Ascending aorta (tissue), 2 donors: ENCODE measurements at regions of chr3 and their contacts with region 1.

Region 1: GRCh38 chr3:127822698-127823425 is 547 bp upstream of the MGLL start:
- DNase-seq: peak in 1 of 2 donors; percentile 81
- H3K4me3 ChIP-seq: peak overlapping the region; percentile 79 to 99
- H3K27ac ChIP-seq: peak overlapping the region; percentile 86 to 88
- H3K4me1 ChIP-seq: peaks cover 0 to 4% of the 10 kb centered on the region in 2 donors
- H3K27me3 ChIP-seq: no peaks in the 10 kb centered on the region
- CTCF ChIP-seq: peak in 1 of 3 experiments; percentile 75

Region 2: GRCh38 chr3:127574880-127575878 is 247.7 kb before region 1 on chr3:
- intact Hi-C with region 1: loop called (anchors 10 kb)
- DNase-seq: peak; percentile 52 to 93
- H3K4me3 ChIP-seq: no peak overlapping the region
- H3K27ac ChIP-seq: no peak overlapping the region
- H3K4me1 ChIP-seq: peaks cover 0 to 4% of the 10 kb centered on the region in 2 donors
- H3K27me3 ChIP-seq: no peaks in the 10 kb centered on the region
- CTCF ChIP-seq: peak; percentile 88 to 99 (median 98)

Region 3: GRCh38 chr3:127672516-127673190 is 150.2 kb before region 1 on chr3 and contains the start of gene ABTB1:
- intact Hi-C with region 1: loop called (anchors 1 kb)
- DNase-seq: peak in 1 of 2 donors; percentile 89
- H3K4me3 ChIP-seq: peak within 1 kb of the TSS; percentile 89 to 90
- H3K27ac ChIP-seq: peak within 1 kb of the TSS; percentile 96
- H3K4me1 ChIP-seq: peaks cover 13 to 16% of the 10 kb centered on the region in 2 donors
- H3K27me3 ChIP-seq: no peaks in the 10 kb centered on the region
- CTCF ChIP-seq: no peak
- total RNA-seq, gene ABTB1: 61.7 TPM

Region 4: DNA sequence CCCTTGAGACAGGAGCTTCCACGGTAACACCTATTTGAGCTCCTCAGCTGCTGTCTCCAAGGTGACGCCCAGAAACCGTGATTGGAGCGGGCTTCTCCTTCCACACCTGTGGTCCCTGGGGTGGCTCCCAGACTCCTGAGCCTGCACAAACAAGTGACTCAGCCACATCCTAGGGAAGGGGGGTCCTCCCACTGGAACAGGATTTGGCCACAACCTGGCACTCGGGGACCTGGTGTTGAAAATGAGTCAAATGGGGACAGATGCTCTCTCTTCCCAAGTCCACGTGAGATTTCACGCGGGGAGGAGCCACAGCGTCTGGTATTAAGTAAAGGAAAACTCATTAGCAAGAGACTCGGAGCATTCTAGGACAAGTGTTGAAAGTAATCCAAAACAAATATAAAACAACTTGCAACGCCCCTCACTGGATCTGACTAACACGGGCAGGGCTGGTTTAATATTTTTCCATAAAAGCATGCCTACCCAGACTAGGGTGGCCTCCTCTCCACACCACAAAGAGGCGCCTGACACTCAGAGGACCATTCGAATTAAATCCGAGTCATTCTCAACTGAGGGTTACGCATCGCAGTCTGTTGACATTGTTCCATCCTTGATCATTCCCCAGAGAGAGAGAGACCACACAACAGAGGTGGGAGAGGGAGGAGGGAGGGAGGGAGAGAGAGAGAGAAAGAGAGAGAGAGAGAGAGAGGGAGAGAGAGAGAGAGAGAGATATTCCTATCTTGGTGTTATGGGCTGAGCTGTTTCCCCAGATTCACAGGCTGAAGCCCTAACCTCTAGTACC is 74.9 kb before region 1 on chr3:
- intact Hi-C with region 1: loop called (anchors 5 kb)
- DNase-seq: peak; percentile 92 to 95
- H3K4me3 ChIP-seq: peak overlapping the region in 1 of 2 donors; percentile 28
- H3K27ac ChIP-seq: peak overlapping the region; percentile 84 to 85
- H3K4me1 ChIP-seq: peaks cover 8 to 28% of the 10 kb centered on the region in 2 donors
- H3K27me3 ChIP-seq: no peaks in the 10 kb centered on the region
- CTCF ChIP-seq: peak; percentile 12 to 27 (median 18)

Region 5: DNA sequence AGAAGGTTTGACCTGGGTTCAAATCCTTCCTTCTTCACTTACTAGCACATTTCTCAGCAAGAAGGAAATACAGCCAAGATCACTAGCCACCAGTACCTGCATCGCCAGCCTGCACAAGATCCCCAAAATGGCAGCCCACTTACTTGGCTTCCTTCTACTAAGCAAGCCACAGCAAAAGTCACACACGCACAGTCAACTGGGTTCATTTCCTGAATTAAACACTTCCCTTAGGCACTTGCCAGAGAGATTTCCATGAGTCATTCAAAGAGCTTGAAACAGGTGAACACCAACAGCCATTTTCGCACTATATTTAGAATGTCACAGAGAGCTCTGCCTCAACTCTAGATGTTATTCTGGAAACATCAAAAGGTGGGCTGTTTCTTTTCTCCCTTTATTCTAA is 43.1 kb before region 1 on chr3:
- intact Hi-C with region 1: loop called (anchors 5 kb)
- DNase-seq: no peak
- H3K4me3 ChIP-seq: no peak overlapping the region
- H3K27ac ChIP-seq: peak overlapping the region; percentile 75 to 80
- H3K4me1 ChIP-seq: peaks cover 13 to 44% of the 10 kb centered on the region in 2 donors
- H3K27me3 ChIP-seq: no peaks in the 10 kb centered on the region
- CTCF ChIP-seq: no peak

Region 6: DNA sequence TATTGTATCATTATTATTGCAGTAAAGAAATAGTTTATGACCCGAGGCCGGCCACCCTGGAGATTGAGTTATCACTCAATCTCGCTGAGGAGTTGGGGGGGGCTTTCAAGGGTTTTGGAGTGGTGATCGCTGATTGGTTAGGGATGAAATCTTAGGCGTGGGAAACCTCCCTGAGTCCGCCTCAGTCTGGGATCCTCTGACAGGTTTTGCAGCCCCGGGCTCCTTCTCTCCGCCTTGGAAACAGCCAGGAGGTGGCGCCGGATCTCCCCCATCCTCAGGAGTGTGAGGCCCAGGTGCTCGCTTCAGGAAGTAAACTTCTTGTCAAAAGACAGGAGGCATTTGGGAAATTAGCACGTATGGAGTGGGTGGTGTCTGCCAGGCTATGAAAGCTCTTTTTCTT is 188.3 kb after region 1 on chr3:
- intact Hi-C with region 1: no loop called
- DNase-seq: no peak
- H3K4me3 ChIP-seq: no peak overlapping the region
- H3K27ac ChIP-seq: no peak overlapping the region
- H3K4me1 ChIP-seq: no peaks in the 10 kb centered on the region
- H3K27me3 ChIP-seq: no peaks in the 10 kb centered on the region
- CTCF ChIP-seq: no peak

Region 7: DNA sequence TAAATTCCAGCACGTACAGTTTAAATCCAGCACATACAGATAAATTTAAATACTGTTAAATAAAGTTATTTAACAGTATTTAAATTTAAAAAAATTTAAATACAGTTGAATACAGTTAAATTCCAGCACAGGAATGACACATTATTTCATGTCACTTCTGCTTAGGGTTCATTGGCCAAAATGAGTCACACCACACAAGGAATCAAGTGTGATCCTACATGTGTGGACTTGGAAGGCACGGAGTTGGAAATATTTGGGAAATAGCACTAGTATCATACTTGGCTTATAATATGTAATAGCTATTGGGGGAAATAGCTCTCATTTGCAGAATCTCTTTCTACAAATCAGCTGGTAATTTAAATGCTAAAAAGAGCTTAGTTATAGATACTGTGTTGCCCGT is 913.7 kb after region 1 on chr3:
- intact Hi-C with region 1: no loop called
- DNase-seq: no peak
- H3K4me3 ChIP-seq: no peak overlapping the region
- H3K27ac ChIP-seq: no peak overlapping the region
- H3K4me1 ChIP-seq: peaks cover 3 to 20% of the 10 kb centered on the region in 2 donors
- H3K27me3 ChIP-seq: no peaks in the 10 kb centered on the region
- CTCF ChIP-seq: no peak